ENCODE measurements at regions of chr14 and their contacts with region 1.

Region 1: DNA sequence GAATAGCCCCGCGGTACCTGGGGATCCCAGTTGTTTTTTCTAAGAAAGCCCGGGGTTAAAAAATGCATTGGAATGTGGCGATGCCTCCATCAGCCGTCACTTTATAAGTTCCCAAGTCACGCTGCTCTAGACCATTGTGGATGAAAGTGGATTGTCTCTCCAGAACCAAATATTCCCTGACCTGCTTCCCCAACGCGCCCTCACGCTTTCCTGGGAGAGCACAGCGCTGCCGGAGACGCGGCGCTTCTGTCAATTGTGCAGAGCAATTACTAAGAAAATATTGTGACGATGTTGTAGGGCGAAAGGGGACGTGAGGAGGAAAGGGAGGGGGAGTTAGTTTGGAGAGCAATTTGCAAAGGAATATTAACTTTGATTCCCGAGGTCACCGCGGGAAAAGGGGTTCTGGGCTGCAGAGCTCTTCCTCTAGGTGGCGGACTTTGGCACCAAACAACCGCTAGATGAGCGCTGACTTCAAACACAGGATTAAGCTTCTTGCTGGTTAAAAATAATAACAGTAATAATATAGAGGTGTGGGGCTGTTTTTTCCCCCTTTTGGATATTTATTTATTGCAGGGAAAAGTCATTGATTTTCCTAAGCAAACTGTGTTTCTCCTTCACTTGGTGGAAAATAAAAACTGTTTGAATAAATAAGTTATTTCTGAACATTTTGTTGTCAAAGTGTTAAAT is 9.6 kb upstream of the FOXG1 start:
- DNase-seq: no peak
- H3K4me3 ChIP-seq: no peak overlapping the region
- H3K27ac ChIP-seq: no peak overlapping the region
- H3K4me1 ChIP-seq: no peaks in the 10 kb centered on the region
- H3K27me3 ChIP-seq: no peaks in the 10 kb centered on the region
- CTCF ChIP-seq: peak; percentile 25; the same call in 1 of the 2 replicates

Region 2: DNA sequence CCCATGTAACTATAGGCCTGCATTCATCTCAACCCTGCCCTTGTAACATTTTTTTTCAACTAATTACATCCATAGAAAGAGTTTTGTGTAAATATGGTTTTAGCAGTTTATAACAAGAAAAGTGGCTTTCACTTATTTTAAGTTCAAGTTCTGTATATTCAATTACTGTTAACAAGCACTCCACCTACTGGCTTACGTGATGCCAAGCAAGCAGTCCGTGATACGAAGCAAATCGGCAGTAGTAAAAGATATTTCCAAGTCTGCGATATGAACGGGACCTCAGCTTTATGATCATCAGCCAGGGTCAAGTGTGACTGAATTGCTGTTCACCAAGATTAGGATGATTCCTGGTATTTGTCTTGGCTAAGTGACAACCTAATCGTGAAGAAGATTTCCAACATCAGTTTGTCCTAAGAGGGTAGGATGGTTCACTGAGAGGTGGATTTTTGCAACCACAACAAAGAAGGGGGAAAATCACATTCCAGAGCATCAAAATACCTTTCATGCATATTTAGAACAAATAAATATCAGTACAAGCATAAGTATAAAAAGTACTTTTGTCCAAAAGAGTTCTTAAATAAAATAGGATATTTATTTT is 465.7 kb after region 1 on chr14:
- CTCF ChIA-PET with region 1: no interaction called
- POLR2A ChIA-PET with region 1: no interaction called
- intact Hi-C with region 1: loop called (anchors 5 kb)
- DNase-seq: no peak
- H3K4me3 ChIP-seq: no peak overlapping the region
- H3K27ac ChIP-seq: no peak overlapping the region
- H3K4me1 ChIP-seq: no peaks in the 10 kb centered on the region
- H3K27me3 ChIP-seq: no peaks in the 10 kb centered on the region
- CTCF ChIP-seq: peak; percentile 40; the same call in 1 of the 2 replicates

Region 3: GRCh38 chr14:29536886-29537511 is 780.0 kb after region 1 on chr14:
- CTCF ChIA-PET with region 1: no interaction called
- POLR2A ChIA-PET with region 1: no interaction called
- intact Hi-C with region 1: loop called (anchors 2 kb)
- DNase-seq: no peak
- H3K4me3 ChIP-seq: no peak overlapping the region
- H3K27ac ChIP-seq: no peak overlapping the region
- H3K4me1 ChIP-seq: no peaks in the 10 kb centered on the region
- H3K27me3 ChIP-seq: no peaks in the 10 kb centered on the region
- CTCF ChIP-seq: peak; percentile 63

Region 4: DNA sequence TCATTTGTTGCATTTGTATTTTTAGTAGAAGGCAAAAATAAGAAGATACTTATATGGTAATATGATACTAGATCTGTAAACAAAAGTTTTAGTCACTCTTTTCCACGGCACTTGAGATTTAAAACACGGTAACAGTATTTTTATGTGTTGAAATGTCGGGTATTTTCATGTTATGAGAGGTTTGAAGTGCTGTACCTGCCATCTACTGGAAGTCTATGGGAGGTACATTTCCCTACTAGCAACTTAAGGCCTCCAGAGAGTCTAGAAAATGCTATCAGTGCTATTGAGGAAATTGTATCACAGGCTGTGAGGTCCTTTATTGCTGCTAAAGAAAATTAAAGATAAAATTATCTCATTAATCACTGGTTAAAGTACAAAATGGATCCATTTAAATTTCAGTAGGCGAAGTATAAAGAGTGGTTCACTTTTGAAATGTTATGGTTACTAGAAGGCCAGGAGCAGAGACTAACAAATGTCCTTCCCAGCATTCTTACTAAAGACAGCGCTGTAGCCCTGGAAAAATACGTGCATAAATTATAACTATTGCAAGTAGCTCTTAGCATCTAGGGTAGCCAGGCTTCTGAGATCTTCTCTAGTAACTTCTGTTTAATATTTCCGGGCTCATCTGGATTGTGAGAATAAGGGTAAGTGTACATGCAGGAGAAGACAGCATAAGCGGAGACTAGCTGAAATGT is 1248.2 kb after region 1 on chr14:
- CTCF ChIA-PET with region 1: no interaction called
- POLR2A ChIA-PET with region 1: no interaction called
- intact Hi-C with region 1: loop called (anchors 5 kb)
- DNase-seq: no peak
- H3K4me3 ChIP-seq: no peak overlapping the region
- H3K27ac ChIP-seq: no peak overlapping the region
- H3K4me1 ChIP-seq: no peaks in the 10 kb centered on the region
- H3K27me3 ChIP-seq: no peaks in the 10 kb centered on the region
- CTCF ChIP-seq: peak; percentile 72

Measured in PC-9 (cell line).